Lower leg skin (tissue), 4 donors: ENCODE measurements at regions of chr4 and their contacts with region 1.

Region 1: GRCh38 chr4:17636696-17637622 is 22.5 kb downstream of the MED28 start:
- DNase-seq: peak; percentile 50 to 91
- H3K4me3 ChIP-seq: no peak overlapping the region
- CTCF ChIP-seq: no peak
- POLR2A ChIP-seq: no peak

Region 2: GRCh38 chr4:17027495-17027894 is 609.5 kb before region 1 on chr4:
- intact Hi-C with region 1: no loop called
- DNase-seq: no peak
- H3K4me3 ChIP-seq: no peak overlapping the region
- CTCF ChIP-seq: no peak
- POLR2A ChIP-seq: no peak

Region 3: DNA sequence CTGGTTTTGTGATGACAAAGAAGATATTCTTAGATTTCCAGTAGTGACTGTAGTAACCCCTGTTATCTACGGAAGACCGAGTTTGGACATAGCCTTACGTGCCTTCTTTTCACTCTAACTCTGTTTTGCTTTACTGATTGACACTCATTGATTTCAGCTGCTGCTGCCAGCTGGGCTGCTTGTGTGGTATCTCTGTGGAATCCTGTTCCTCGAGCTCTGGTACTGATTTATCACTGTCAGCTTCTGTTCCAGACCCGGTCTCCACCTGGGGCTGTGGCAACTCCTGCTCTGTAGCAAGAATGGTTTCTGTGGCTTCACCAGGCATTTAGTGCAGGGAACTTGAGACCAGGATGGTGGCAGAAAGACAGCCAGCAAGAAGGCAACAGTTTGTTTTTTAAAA is 84.5 kb before region 1 on chr4:
- intact Hi-C with region 1: loop called (anchors 10 kb)
- DNase-seq: no peak
- H3K4me3 ChIP-seq: no peak overlapping the region
- CTCF ChIP-seq: no peak
- POLR2A ChIP-seq: no peak

Region 4: GRCh38 chr4:18067031-18067430 is 430.1 kb after region 1 on chr4:
- intact Hi-C with region 1: no loop called
- DNase-seq: no peak
- H3K4me3 ChIP-seq: no peak overlapping the region
- CTCF ChIP-seq: no peak
- POLR2A ChIP-seq: no peak

Region 5: DNA sequence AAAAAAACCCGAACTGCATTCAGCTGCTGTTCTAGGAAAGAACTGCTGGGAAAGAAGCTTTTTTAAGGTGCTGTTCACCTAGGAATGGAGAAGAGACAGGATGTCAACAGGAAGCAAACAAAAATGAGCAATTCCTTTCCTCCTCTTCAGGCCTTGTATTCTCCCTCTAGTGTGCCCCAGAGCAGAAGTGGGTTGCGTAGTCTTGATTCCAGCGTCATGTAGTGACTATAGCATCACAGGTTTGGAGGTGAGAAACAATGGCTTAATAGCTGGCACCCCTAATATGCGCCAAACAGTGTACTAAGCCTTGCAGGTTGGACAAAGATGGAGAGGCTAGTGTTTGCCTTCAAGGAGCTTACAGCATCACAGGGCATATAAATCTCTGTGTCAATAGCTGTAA is 530.9 kb after region 1 on chr4:
- intact Hi-C with region 1: no loop called
- DNase-seq: no peak
- H3K4me3 ChIP-seq: no peak overlapping the region
- CTCF ChIP-seq: no peak
- POLR2A ChIP-seq: no peak